ENCODE measurements at regions of chr5 and their contacts with region 1.

Region 1: GRCh38 chr5:94693043-94693822 is 74.8 kb downstream of the SLF1 start:
- DNase-seq: no peak
- ATAC-seq: peak; percentile 73
- H3K4me3 Mint-ChIP-seq: no peak overlapping the region
- H3K27ac Mint-ChIP-seq: peak overlapping the region; percentile 39
- H3K4me1 Mint-ChIP-seq: peaks cover 9% of the 10 kb centered on the region
- H3K27me3 Mint-ChIP-seq: no peaks in the 10 kb centered on the region

Region 2: GRCh38 chr5:94524841-94525697 is 168.2 kb before region 1 on chr5:
- CTCF ChIA-PET with region 1: interaction called, 15 read pairs
- DNase-seq: peak; percentile 44
- ATAC-seq: peak; percentile 80
- H3K4me3 Mint-ChIP-seq: no peak overlapping the region
- H3K27ac Mint-ChIP-seq: no peak overlapping the region
- H3K4me1 Mint-ChIP-seq: peaks cover 6% of the 10 kb centered on the region
- H3K27me3 Mint-ChIP-seq: no peaks in the 10 kb centered on the region

Measured in activated CD8-positive, alpha-beta memory T cell treated with anti-CD3 and anti-CD28 coated beads, Interleukin-2, amount 10 ng/mL, durations not matched to agents 7 days and 5 days (primary cell).